ENCODE measurements at regions of chr15 and their contacts with region 1.

Region 1: DNA sequence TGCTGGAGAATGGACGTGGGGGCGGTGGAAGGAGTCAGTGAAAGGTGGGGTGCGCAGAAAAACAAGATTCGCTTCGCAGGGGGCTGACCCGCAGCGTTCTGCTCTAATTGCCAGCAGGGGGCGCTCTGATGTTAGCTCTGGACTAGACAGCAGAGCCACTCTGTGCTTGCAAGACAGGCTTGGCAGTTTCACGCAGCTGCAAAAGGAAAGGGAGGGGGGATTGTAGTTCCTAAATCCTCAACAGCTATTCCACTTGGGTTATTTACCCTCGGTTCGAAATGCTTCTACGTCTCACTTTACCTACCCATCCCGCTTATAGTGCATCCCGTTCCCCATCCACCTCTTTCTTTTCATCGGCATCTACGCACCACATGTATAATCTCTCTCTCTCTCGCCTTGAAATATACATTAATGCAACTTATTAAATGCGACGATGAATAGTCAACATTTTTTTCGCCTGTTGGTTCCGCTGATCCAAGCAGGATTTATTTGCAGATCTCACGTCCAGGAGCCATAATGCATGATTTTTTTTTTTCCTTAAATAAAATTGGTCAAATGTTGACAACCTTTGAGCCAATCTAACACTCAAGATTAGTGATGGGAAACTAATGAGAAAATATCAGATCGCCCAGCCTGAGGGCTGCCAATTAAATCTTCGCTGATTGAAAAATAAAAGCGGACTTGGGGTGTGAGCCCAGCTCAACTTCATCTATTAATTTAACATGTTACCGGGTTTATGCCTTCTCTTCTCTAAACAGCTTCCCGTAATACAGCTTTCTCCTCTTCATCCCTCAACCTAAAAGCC is 216.4 kb downstream of the MEIS2 start:
- DNase-seq: peak; percentile 41 to 49
- ATAC-seq: peak in 1 of 2 donors; percentile 51
- H3K4me3 ChIP-seq: peak overlapping the region in 1 of 4 donors; percentile 39
- H3K27ac ChIP-seq: no peak overlapping the region
- H3K4me1 ChIP-seq: peaks cover 11 to 16% of the 10 kb centered on the region in 2 donors
- H3K27me3 ChIP-seq: peaks cover 100% of the 10 kb centered on the region in 3 donors
- CTCF ChIP-seq: peak; percentile 26 to 63 (median 52)
- POLR2A ChIP-seq: no peak

Region 2: GRCh38 chr15:36517758-36518157 is 366.2 kb before region 1 on chr15:
- in situ Hi-C with region 1: no loop called
- intact Hi-C with region 1: no loop called
- DNase-seq: no peak
- ATAC-seq: no peak
- H3K4me3 ChIP-seq: no peak overlapping the region
- H3K27ac ChIP-seq: no peak overlapping the region
- H3K4me1 ChIP-seq: no peaks in the 10 kb centered on the region
- H3K27me3 ChIP-seq: no peaks in the 10 kb centered on the region
- CTCF ChIP-seq: no peak
- POLR2A ChIP-seq: no peak

Region 3: GRCh38 chr15:37100109-37100965 is 216.4 kb after region 1 on chr15 and contains the start of gene MEIS2:
- in situ Hi-C with region 1: loop called in 3 of 4 experiments (anchors 25 kb)
- intact Hi-C with region 1: loop called (anchors 5 kb)
- DNase-seq: peak; percentile 59 to 67
- ATAC-seq: peak; percentile 23 to 45
- H3K4me3 ChIP-seq: peak within 1 kb of the TSS; percentile 65 to 93 (median 72)
- H3K27ac ChIP-seq: peak within 1 kb of the TSS; percentile 32 to 75 (median 64)
- H3K4me1 ChIP-seq: peaks cover 26 to 49% of the 10 kb centered on the region in 2 donors
- H3K27me3 ChIP-seq: peaks cover 92 to 98% (median 98%) of the 10 kb centered on the region in 3 donors
- CTCF ChIP-seq: no peak
- POLR2A ChIP-seq: peak in 1 of 2 donors; percentile 2
- total RNA-seq, gene MEIS2: 0.31 to 1.8 (median 0.40) TPM in 3 of 4 donors, not detected in the other

Region 4: DNA sequence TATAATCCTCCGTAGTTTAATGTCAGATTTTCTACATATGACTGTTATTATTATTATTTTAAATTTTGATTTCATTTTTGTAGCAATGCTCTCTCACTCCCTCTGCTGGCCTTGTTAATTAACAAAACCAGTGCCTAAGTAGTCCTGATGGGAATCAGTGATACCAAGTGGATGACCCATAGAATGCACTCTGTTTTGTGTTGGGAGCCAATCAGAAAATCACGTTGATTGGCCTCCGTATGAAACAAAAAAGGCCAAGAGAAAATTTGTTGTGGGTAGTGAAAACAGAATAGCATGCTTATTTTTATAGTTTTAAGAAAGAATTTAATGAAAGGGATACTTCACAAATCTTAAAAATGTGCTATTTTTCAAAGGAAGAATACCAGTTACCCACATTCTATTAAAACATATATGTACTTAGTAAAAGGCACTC is 250.8 kb after region 1 on chr15:
- in situ Hi-C with region 1: no loop called
- intact Hi-C with region 1: loop called (anchors 10 kb)
- DNase-seq: no peak
- ATAC-seq: no peak
- H3K4me3 ChIP-seq: no peak overlapping the region
- H3K27ac ChIP-seq: no peak overlapping the region
- H3K4me1 ChIP-seq: no peaks in the 10 kb centered on the region
- H3K27me3 ChIP-seq: peaks cover 0 to 6% (median 0%) of the 10 kb centered on the region in 3 donors
- CTCF ChIP-seq: peak in 4 of 5 experiments; percentile 31 to 62 (median 40)
- POLR2A ChIP-seq: no peak

Region 5: GRCh38 chr15:37891766-37892368 is 1008.0 kb after region 1 on chr15:
- in situ Hi-C with region 1: loop called in 1 of 4 experiments (anchors 25 kb)
- intact Hi-C with region 1: no loop called
- DNase-seq: no peak
- ATAC-seq: no peak
- H3K4me3 ChIP-seq: no peak overlapping the region
- H3K27ac ChIP-seq: no peak overlapping the region
- H3K4me1 ChIP-seq: no peaks in the 10 kb centered on the region
- H3K27me3 ChIP-seq: no peaks in the 10 kb centered on the region
- CTCF ChIP-seq: peak in 3 of 5 experiments; percentile 35 to 58 (median 35)
- POLR2A ChIP-seq: no peak